Posterior vena cava (tissue), 2 donors: ENCODE measurements at regions of chr1 and their contacts with region 1.

Region 1: DNA sequence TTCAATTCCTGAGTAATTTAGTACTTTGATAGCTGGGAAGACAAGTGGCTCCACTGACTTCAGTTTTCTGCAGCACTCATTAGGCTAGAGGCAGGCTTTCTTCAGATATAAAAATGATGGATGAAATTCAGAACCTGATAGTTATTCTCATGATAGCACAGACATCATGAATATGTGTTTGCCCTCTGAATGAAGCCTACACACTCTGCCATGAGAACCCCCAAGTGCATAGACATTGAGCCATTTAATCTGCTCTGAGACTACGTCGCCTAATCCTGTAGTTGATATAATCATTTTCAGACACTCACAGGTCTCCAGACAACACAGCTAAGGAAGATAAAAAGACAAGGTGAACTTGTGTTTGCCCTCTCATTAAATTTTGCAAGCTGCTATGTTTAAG is 566.1 kb downstream of the AMY1C start:
- DNase-seq: no peak

Region 2: DNA sequence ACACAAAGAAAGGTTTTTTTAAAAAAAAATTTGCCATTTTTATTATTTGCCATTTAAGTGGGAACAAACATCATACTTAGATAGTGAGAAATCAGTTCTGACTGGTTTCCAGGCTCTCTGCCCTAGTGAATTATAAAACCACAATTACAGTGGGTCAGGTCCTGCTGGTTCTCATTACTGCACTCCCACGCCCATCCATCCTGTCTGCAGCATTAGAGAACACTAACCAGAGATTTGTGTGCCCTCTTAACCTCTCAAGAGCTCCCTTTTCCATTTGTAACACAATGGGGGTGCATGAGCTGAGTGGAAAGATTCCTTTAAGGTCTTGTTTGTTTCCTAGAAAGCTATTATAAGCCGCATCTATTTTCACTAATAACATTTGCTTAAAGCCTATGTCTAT is 76.8 kb before region 1 on chr1:
- intact Hi-C with region 1: no loop called
- DNase-seq: no peak

Region 3: DNA sequence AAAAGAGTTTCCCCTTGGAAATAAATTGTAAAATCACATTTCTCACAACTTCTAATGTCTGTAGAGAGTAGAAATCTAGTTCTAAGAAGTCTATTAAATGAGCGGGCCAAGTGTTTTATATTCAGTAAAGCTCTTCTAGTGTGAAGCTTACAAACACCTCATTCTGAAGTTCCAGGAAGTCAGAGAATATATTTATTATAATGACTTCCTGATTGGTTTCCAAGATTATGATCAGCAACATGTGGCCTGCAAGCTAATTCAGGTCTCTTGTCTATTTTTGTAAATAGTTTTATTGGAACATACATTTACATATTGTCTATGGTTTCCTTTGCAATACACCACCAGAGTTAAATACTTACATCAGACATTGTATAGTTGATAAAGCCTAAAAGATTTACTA is 37.8 kb after region 1 on chr1:
- intact Hi-C with region 1: loop called in 1 of 2 experiments (anchors 1 kb)
- DNase-seq: no peak